WTC11 (cell line): ENCODE measurements at regions of chr7 and their contacts with region 1.

Region 1: DNA sequence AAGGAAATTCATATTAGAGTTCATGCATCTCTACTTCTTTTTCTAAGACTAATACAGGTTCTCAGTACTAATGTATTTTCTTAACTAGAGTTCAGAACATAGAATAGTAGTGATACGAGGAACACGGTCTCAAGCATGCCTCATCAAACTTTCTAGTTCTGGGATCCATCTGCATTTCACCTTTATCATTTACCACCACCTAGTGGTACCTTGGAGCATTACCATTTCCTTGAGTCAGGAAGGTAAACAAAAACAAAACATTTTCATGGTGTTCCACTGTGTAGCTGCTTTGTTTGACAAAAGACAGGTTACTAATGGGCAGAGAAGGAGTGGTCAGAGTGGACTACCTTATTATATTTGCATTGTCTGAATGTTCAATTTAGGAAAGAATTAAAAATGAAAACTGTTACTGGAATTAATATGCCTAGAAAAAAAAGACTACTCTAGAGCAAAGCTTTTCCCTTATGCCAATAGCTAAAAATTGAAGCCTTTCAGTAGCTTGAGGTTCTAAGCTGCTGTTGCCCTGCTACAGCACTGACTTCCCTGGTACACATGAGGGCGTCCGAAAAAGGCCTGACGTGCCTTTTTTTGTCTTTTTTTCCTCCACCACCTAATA is 44.5 kb downstream of the STARD3NL start:
- DNase-seq: no peak
- ATAC-seq: peak; percentile 78
- H3K4me3 Mint-ChIP-seq: no peak overlapping the region
- H3K27ac Mint-ChIP-seq: no peak overlapping the region
- H3K4me1 Mint-ChIP-seq: no peaks in the 10 kb centered on the region
- H3K27me3 Mint-ChIP-seq: no peaks in the 10 kb centered on the region
- CTCF ChIP-seq: peak; percentile 63

Region 2: GRCh38 chr7:38107486-38107893 is 115.1 kb before region 1 on chr7:
- CTCF ChIA-PET with region 1: interaction called, 13 read pairs
- POLR2A ChIA-PET with region 1: interaction called, 5 read pairs
- DNase-seq: peak; percentile 81
- ATAC-seq: peak; percentile 94
- H3K4me3 Mint-ChIP-seq: no peak overlapping the region
- H3K27ac Mint-ChIP-seq: no peak overlapping the region
- H3K4me1 Mint-ChIP-seq: 0 out of 2 replicates have a peak, but pooled peaks cover 7% of the 10 kb centered on the region
- H3K27me3 Mint-ChIP-seq: no peaks in the 10 kb centered on the region
- CTCF ChIP-seq: peak; percentile 74

Region 3: GRCh38 chr7:38245409-38245977 is 22.9 kb after region 1 on chr7:
- CTCF ChIA-PET with region 1: no interaction called
- POLR2A ChIA-PET with region 1: no interaction called
- DNase-seq: no peak
- ATAC-seq: no peak
- H3K4me3 Mint-ChIP-seq: no peak overlapping the region
- H3K27ac Mint-ChIP-seq: no peak overlapping the region
- H3K4me1 Mint-ChIP-seq: no peaks in the 10 kb centered on the region
- H3K27me3 Mint-ChIP-seq: no peaks in the 10 kb centered on the region
- CTCF ChIP-seq: no peak

Region 4: GRCh38 chr7:38318803-38319416 is 96.3 kb after region 1 on chr7:
- CTCF ChIA-PET with region 1: interaction called, 11 read pairs
- POLR2A ChIA-PET with region 1: no interaction called
- DNase-seq: peak; percentile 49
- ATAC-seq: peak; percentile 97
- H3K4me3 Mint-ChIP-seq: no peak overlapping the region
- H3K27ac Mint-ChIP-seq: peak overlapping the region; percentile 48
- H3K4me1 Mint-ChIP-seq: peaks cover 26% of the 10 kb centered on the region
- H3K27me3 Mint-ChIP-seq: no peaks in the 10 kb centered on the region; the same call in 1 of the 2 replicates
- CTCF ChIP-seq: no peak